H1 (cell line): ENCODE measurements at regions of chr1 and their contacts with region 1.

Region 1: DNA sequence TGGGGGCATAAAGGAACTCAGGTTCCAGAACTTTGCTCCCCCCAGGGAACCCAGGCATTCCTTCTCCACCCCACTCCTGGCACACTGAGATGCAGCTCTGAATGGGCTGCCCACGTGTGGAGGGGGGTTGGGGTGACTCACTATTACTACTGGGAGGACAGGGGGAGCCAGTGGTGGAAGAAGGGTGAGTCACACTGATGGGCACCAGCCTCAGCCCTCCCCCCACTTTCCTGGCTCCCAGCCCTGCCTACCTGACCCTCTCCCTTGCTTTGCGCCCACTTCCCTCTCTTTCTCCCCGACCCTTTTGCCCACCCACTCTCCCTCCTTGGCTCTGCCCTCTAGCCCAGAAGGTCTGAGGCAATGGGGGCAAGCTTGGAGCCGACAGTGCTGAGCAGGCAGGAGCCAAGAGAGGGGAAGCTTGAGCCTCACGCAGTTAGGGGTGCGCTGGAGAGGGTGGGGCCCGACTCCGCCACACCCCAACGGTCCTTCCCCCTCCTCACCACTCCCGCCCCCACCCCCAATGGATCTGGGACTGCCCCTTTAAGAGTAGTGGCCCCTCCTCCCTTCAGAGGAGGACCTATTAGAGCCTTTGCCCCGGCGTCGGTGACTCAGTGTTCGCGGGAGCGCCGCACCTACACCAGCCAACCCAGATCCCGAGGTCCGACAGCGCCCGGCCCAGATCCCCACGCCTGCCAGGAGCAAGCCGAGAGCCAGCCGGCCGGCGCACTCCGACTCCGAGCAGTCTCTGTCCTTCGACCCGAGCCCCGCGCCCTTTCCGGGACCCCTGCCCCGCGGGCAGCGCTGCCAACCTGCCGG is at the start of gene LMNA:
- DNase-seq: peak in 1 of 2 experiments; percentile 86
- H3K4me3 ChIP-seq: peak within 1 kb of the TSS; percentile 69 to 83 (median 78)
- H3K27ac ChIP-seq: peak within 1 kb of the TSS; percentile 59; the same call in 1 of the 2 replicates
- H3K4me1 ChIP-seq: peaks cover 0 to 15% (median 14%) of the 10 kb centered on the region in 4 experiments; a peak in 6 of 7 replicates
- H3K27me3 ChIP-seq: peaks cover 0 to 2% (median 0%) of the 10 kb centered on the region in 4 experiments; a peak in 1 of 7 replicates
- CTCF ChIP-seq: no peak
- EP300 ChIP-seq: no peak
- POLR2A ChIP-seq: peak; percentile 70 to 78
- RAD21 ChIP-seq: no peak
- total RNA-seq, gene LMNA: 46.8 and 48.0 TPM in 2 replicates

Region 2: GRCh38 chr1:156076501-156077429 is 37.5 kb before region 1 on chr1:
- CTCF ChIA-PET with region 1: interaction called, 1,994 read pairs
- POLR2A ChIA-PET with region 1: interaction called, 763 read pairs
- DNase-seq: peak in 1 of 2 experiments; percentile 84
- H3K4me3 ChIP-seq: peak overlapping the region in 3 of 4 experiments; percentile 2 to 44 (median 4); a peak in 5 of 8 replicates
- H3K27ac ChIP-seq: peak overlapping the region; percentile 53; the same call in 1 of the 2 replicates
- H3K4me1 ChIP-seq: peaks cover 24 to 57% (median 48%) of the 10 kb centered on the region in 4 experiments
- H3K27me3 ChIP-seq: no peaks in the 10 kb centered on the region
- CTCF ChIP-seq: no peak
- EP300 ChIP-seq: no peak
- POLR2A ChIP-seq: no peak
- RAD21 ChIP-seq: no peak

Region 3: GRCh38 chr1:156096640-156097391 is 17.5 kb before region 1 on chr1:
- CTCF ChIA-PET with region 1: interaction called, 1,994 read pairs
- POLR2A ChIA-PET with region 1: interaction called, 763 read pairs
- DNase-seq: peak in 1 of 2 experiments; percentile 95
- H3K4me3 ChIP-seq: no peak overlapping the region
- H3K27ac ChIP-seq: no peak overlapping the region
- H3K4me1 ChIP-seq: peaks cover 0 to 10% (median 3%) of the 10 kb centered on the region in 4 experiments; a peak in 3 of 7 replicates
- H3K27me3 ChIP-seq: no peaks in the 10 kb centered on the region; a peak in 1 of 7 replicates
- CTCF ChIP-seq: peak; percentile 94 to 100 (median 97)
- EP300 ChIP-seq: no peak
- POLR2A ChIP-seq: no peak
- RAD21 ChIP-seq: peak; percentile 93